SK-N-SH (cell line): ENCODE measurements at regions of chr2 and their contacts with region 1.

Region 1: DNA sequence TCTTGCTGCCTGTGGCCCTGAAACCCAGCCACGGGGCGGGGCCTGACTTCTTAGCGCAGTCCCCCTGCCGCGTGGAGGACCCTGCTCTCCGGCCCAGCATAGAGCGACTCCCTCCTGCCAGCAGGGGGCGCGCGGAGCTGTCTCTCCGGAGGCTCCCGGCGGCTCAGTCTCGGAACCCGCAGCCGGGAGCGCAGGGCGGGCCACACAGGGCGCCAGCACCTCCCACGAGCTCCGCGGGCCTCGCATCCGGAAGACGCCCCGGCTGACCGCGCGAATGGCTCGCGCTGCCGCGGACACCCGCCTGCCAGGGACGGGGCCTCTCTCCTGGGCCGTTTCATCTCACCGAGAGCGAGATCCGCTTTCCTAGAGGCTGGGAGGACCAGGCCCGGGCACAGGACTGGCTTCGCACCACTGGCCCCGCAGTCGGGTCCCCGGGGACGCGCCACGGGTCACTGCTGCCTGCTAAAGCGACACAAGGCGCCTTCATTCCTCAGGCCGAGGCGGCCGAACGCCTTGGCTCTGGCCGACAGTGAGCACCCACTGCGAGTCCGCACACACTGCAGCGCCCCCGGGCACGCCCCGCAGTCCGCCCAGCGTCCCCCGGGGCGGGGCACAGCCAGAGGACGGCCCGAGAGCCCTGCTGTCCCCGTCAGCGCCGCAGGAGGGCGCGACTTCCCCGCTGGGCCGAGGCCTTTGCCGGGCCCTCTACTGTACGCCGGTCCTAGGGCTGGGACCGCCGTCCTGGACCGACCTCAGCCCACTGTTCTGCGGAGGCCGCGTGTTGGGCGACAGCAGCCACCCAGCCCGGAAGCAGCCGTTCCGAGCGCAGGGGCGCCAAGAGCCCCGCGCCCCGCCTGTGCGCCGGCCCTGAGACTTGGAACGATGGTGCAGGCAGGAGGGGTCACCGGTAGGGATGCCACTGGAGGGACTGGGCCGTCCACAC is 39.0 kb upstream of the ARHGEF4 start:
- DNase-seq: peak; percentile 93
- H3K4me3 ChIP-seq: peak overlapping the region; percentile 79 to 85
- H3K27ac ChIP-seq: peak overlapping the region; percentile 68 to 85
- H3K4me1 ChIP-seq: peaks cover 0 to 11% of the 10 kb centered on the region in 2 experiments; a peak in 1 of 4 replicates
- H3K27me3 ChIP-seq: no peaks in the 10 kb centered on the region
- CTCF ChIP-seq: peak; percentile 73
- EP300 ChIP-seq: no peak; a peak in 1 of 4 replicates
- RAD21 ChIP-seq: peak; percentile 90

Region 2: GRCh38 chr2:130300258-130300969 is 497.4 kb before region 1 on chr2:
- CTCF ChIA-PET with region 1: no interaction called
- POLR2A ChIA-PET with region 1: no interaction called
- DNase-seq: no peak
- H3K4me3 ChIP-seq: no peak overlapping the region
- H3K27ac ChIP-seq: no peak overlapping the region
- H3K4me1 ChIP-seq: no peaks in the 10 kb centered on the region
- H3K27me3 ChIP-seq: no peaks in the 10 kb centered on the region
- CTCF ChIP-seq: no peak
- EP300 ChIP-seq: no peak
- RAD21 ChIP-seq: no peak

Region 3: GRCh38 chr2:130366720-130367119 is 431.0 kb before region 1 on chr2:
- CTCF ChIA-PET with region 1: no interaction called
- POLR2A ChIA-PET with region 1: no interaction called
- DNase-seq: no peak
- H3K4me3 ChIP-seq: no peak overlapping the region
- H3K27ac ChIP-seq: no peak overlapping the region
- H3K4me1 ChIP-seq: peaks cover 0 to 6% of the 10 kb centered on the region in 2 experiments; a peak in 1 of 4 replicates
- H3K27me3 ChIP-seq: no peaks in the 10 kb centered on the region
- CTCF ChIP-seq: no peak
- EP300 ChIP-seq: no peak
- RAD21 ChIP-seq: no peak

Region 4: DNA sequence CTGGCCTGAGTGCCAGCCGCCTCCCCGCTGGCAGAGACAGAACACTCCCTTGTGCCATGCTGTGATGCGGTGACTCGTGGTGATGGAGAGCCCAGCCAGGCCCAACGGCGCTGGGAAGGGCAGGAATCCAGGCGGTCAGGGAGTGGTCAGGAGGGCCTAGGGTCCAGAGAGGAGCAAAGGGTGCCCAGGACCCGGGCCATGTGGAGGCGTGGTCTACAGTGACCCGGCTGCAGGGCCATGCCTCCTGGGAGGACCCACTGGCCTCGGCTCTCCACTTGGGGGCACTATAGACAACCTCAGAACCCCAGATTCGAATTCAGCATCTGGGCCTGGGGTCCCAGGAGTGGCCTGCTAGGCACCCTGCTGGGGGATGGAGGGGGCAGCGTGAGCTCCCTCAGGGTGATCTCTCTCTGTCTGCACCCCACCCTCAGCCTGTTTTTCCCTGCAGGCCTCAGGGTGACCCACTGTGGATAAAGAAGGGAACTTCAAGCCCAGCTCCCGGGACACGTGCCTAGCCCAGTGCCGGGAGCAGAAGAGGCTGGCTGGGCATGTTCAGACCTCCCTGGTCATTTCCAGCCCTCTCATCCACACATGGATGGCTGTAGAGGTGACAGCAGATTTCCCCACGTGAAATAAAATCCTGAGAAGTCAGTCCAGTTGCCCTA is 29.4 kb before region 1 on chr2:
- CTCF ChIA-PET with region 1: interaction called, 22 read pairs
- POLR2A ChIA-PET with region 1: no interaction called
- DNase-seq: peak; percentile 53
- H3K4me3 ChIP-seq: no peak overlapping the region
- H3K27ac ChIP-seq: no peak overlapping the region
- H3K4me1 ChIP-seq: peaks cover 0 to 14% of the 10 kb centered on the region in 2 experiments; a peak in 1 of 4 replicates
- H3K27me3 ChIP-seq: no peaks in the 10 kb centered on the region
- CTCF ChIP-seq: 0 out of 2 replicates have a peak, but pooled peaks have one; percentile 16
- EP300 ChIP-seq: no peak
- RAD21 ChIP-seq: no peak

Region 5: DNA sequence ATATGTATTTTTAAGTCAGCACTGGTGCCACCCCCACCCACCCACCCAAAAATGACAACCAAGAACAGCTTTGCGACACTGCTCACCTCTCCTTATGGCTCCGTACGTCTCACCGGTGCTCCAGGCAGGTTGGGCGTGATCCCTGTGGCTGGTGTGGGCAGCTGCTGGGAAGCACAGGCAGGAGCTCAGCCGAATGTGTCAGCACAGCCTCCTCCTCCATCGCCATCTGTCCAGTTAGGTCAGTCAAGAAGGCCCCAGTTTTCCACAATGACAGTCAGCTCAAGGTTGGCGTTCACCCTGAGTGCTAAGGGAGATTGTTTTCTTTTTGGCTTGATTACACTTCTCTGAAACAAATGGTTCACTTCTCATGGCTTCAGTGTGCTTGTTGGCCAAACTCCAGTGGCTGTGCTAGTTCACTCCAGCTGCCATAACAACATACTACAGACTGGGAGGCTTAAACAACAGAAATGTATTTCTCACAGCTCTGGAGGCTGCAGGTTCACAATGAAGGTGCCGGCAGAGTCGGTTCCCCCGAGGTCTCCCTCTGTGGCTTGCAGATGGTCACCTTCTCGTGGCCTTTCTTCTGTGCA is 12.2 kb before region 1 on chr2:
- CTCF ChIA-PET with region 1: interaction called, 12 read pairs
- POLR2A ChIA-PET with region 1: no interaction called
- DNase-seq: no peak
- H3K4me3 ChIP-seq: no peak overlapping the region
- H3K27ac ChIP-seq: no peak overlapping the region
- H3K4me1 ChIP-seq: no peaks in the 10 kb centered on the region
- H3K27me3 ChIP-seq: no peaks in the 10 kb centered on the region
- CTCF ChIP-seq: no peak
- EP300 ChIP-seq: no peak
- RAD21 ChIP-seq: no peak

Region 6: DNA sequence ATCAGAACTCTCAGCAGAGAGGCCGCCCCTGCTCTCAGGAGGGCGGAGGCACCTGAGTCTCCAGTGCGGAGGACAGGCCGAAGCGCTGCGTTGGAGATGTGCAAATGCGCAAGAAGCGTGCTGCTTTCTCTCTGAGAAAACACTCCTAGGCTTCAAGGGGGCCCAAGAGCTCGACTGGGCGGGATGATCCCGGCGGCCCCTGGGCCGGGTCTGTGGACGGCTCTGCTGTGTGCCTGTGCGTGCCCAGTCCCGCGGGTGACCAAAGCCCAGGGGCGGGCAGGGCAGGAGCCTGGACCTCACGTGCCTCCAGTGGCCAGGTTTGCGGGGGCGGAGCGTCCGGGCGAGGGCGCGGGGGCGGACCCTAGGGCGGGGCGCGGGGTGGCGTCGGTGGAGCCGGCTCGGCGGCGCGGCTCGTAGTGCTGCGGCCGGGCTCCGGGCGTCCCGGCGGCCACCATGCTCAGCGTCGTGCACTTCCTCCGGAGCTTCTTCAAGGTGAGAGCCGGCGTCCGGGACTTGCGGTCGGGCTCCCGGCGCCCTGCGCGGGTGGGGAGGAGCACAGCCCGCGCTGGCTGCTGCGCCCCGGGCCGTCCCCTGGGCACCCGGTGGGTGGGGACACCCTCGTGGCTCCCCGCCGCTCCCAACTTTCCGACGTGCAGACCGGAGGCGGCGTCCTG is 38.9 kb after region 1 on chr2 and contains the start of gene ARHGEF4:
- CTCF ChIA-PET with region 1: interaction called, 19 read pairs
- POLR2A ChIA-PET with region 1: no interaction called
- DNase-seq: peak; percentile 89
- H3K4me3 ChIP-seq: peak within 1 kb of the TSS in 1 of 2 experiments; percentile 34; a peak in 2 of 4 replicates
- H3K27ac ChIP-seq: no peak within 1 kb of the TSS
- H3K4me1 ChIP-seq: no peaks in the 10 kb centered on the region
- H3K27me3 ChIP-seq: no peaks in the 10 kb centered on the region; the same call in 1 of the 2 replicates
- CTCF ChIP-seq: no peak
- EP300 ChIP-seq: no peak
- RAD21 ChIP-seq: no peak
- polyA plus RNA-seq, gene ARHGEF4: 1.5 and 2.3 TPM in 2 replicates

Region 7: GRCh38 chr2:130850788-130851623 is 53.2 kb after region 1 on chr2:
- CTCF ChIA-PET with region 1: interaction called, 18 read pairs
- POLR2A ChIA-PET with region 1: no interaction called
- DNase-seq: peak; percentile 57
- H3K4me3 ChIP-seq: no peak overlapping the region
- H3K27ac ChIP-seq: no peak overlapping the region
- H3K4me1 ChIP-seq: no peaks in the 10 kb centered on the region; a peak in 1 of 4 replicates
- H3K27me3 ChIP-seq: no peaks in the 10 kb centered on the region
- CTCF ChIP-seq: no peak
- EP300 ChIP-seq: no peak
- RAD21 ChIP-seq: no peak

Region 8: GRCh38 chr2:130884503-130884902 is 86.7 kb after region 1 on chr2:
- CTCF ChIA-PET with region 1: interaction called, 54 read pairs
- POLR2A ChIA-PET with region 1: no interaction called
- DNase-seq: no peak
- H3K4me3 ChIP-seq: no peak overlapping the region
- H3K27ac ChIP-seq: no peak overlapping the region; a peak in 1 of 4 replicates
- H3K4me1 ChIP-seq: peaks cover 0 to 17% of the 10 kb centered on the region in 2 experiments; a peak in 2 of 4 replicates
- H3K27me3 ChIP-seq: no peaks in the 10 kb centered on the region; the same call in 1 of the 2 replicates
- CTCF ChIP-seq: no peak
- EP300 ChIP-seq: no peak
- RAD21 ChIP-seq: peak; percentile 42

Region 9: GRCh38 chr2:130963849-130964793 is 166.4 kb after region 1 on chr2:
- CTCF ChIA-PET with region 1: interaction called, 16 read pairs
- POLR2A ChIA-PET with region 1: no interaction called
- DNase-seq: peak; percentile 82
- H3K4me3 ChIP-seq: peak overlapping the region; percentile 31 to 35; a peak in 2 of 4 replicates
- H3K27ac ChIP-seq: no peak overlapping the region
- H3K4me1 ChIP-seq: peaks cover 0 to 8% of the 10 kb centered on the region in 2 experiments; a peak in 1 of 4 replicates
- H3K27me3 ChIP-seq: peaks cover 21% of the 10 kb centered on the region
- CTCF ChIP-seq: peak; percentile 20; the same call in 1 of the 2 replicates
- EP300 ChIP-seq: no peak
- RAD21 ChIP-seq: peak; percentile 26

Region 10: GRCh38 chr2:131067488-131068125 is 269.8 kb after region 1 on chr2:
- CTCF ChIA-PET with region 1: no interaction called
- POLR2A ChIA-PET with region 1: no interaction called
- DNase-seq: no peak
- H3K4me3 ChIP-seq: no peak overlapping the region
- H3K27ac ChIP-seq: no peak overlapping the region
- H3K4me1 ChIP-seq: peaks cover 0 to 13% of the 10 kb centered on the region in 2 experiments; a peak in 1 of 4 replicates
- H3K27me3 ChIP-seq: no peaks in the 10 kb centered on the region
- CTCF ChIP-seq: no peak
- EP300 ChIP-seq: no peak
- RAD21 ChIP-seq: no peak